IMR-90 (cell line): ENCODE measurements at regions of chr3 and their contacts with region 1.

Region 1: GRCh38 chr3:174125267-174125824 is 727.8 kb downstream of the NLGN1 start:
- DNase-seq: peak; percentile 65
- ATAC-seq: peak; percentile 87
- H3K4me3 ChIP-seq: no peak overlapping the region
- H3K27ac ChIP-seq: no peak overlapping the region
- H3K4me1 ChIP-seq: peaks cover 5% of the 10 kb centered on the region; the same call in 1 of the 2 replicates
- H3K27me3 ChIP-seq: no peaks in the 10 kb centered on the region
- CTCF ChIP-seq: peak; percentile 80
- POLR2A ChIP-seq: no peak
- RAD21 ChIP-seq: peak; percentile 91

Region 2: GRCh38 chr3:173266441-173266840 is 858.9 kb before region 1 on chr3:
- CTCF ChIA-PET with region 1: no interaction called
- POLR2A ChIA-PET with region 1: no interaction called
- dilution Hi-C with region 1: no loop called
- in situ Hi-C with region 1: no loop called
- intact Hi-C with region 1: no loop called
- DNase-seq: no peak
- ATAC-seq: no peak
- H3K4me3 ChIP-seq: no peak overlapping the region
- H3K27ac ChIP-seq: no peak overlapping the region
- H3K4me1 ChIP-seq: no peaks in the 10 kb centered on the region
- H3K27me3 ChIP-seq: no peaks in the 10 kb centered on the region
- CTCF ChIP-seq: no peak
- POLR2A ChIP-seq: no peak
- RAD21 ChIP-seq: no peak

Region 3: DNA sequence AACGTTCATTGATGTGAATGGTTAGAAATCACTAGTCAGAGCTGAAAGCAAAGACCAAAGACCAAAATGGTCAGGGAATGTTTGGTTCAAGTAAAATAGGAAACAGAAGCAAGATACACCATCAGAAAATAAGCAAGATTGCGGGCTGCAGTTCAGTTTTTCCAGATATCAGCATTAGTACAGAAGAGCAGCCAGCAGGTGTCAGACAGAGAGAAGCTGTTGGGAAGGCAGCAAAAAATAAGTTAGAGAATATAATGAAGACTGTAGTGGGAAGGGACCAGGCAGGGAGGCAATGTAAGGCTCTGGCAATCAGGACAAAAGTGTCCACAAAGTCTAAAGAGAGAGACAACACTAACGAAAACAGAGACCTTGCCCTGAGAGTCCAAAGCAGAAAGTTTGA is 94.4 kb after region 1 on chr3:
- CTCF ChIA-PET with region 1: no interaction called
- POLR2A ChIA-PET with region 1: no interaction called
- dilution Hi-C with region 1: no loop called
- in situ Hi-C with region 1: no loop called
- intact Hi-C with region 1: no loop called
- DNase-seq: no peak
- ATAC-seq: no peak
- H3K4me3 ChIP-seq: no peak overlapping the region
- H3K27ac ChIP-seq: no peak overlapping the region
- H3K4me1 ChIP-seq: peaks cover 2% of the 10 kb centered on the region; the same call in 1 of the 2 replicates
- H3K27me3 ChIP-seq: no peaks in the 10 kb centered on the region
- CTCF ChIP-seq: 0 out of 2 replicates have a peak, but pooled peaks have one; percentile 17
- POLR2A ChIP-seq: no peak
- RAD21 ChIP-seq: peak; percentile 15; the same call in 1 of the 2 replicates

Region 4: GRCh38 chr3:174397848-174398247 is 272.5 kb after region 1 on chr3:
- CTCF ChIA-PET with region 1: interaction called, 3 read pairs
- POLR2A ChIA-PET with region 1: no interaction called
- dilution Hi-C with region 1: no loop called
- in situ Hi-C with region 1: no loop called
- intact Hi-C with region 1: loop called (anchors 2 kb)
- DNase-seq: peak; percentile 50
- ATAC-seq: 0 out of 2 replicates have a peak, but pooled peaks have one; percentile 24
- H3K4me3 ChIP-seq: no peak overlapping the region
- H3K27ac ChIP-seq: no peak overlapping the region
- H3K4me1 ChIP-seq: no peaks in the 10 kb centered on the region
- H3K27me3 ChIP-seq: no peaks in the 10 kb centered on the region
- CTCF ChIP-seq: peak; percentile 60
- POLR2A ChIP-seq: no peak
- RAD21 ChIP-seq: peak; percentile 72

Region 5: GRCh38 chr3:174955513-174956001 is 830.2 kb after region 1 on chr3:
- CTCF ChIA-PET with region 1: no interaction called
- POLR2A ChIA-PET with region 1: no interaction called
- dilution Hi-C with region 1: no loop called
- in situ Hi-C with region 1: no loop called
- intact Hi-C with region 1: loop called (anchors 5 kb)
- DNase-seq: peak; percentile 48
- ATAC-seq: peak; percentile 25; the same call in 1 of the 2 replicates
- H3K4me3 ChIP-seq: no peak overlapping the region
- H3K27ac ChIP-seq: peak overlapping the region; percentile 29; the same call in 1 of the 2 replicates
- H3K4me1 ChIP-seq: peaks cover 19% of the 10 kb centered on the region
- H3K27me3 ChIP-seq: no peaks in the 10 kb centered on the region
- CTCF ChIP-seq: no peak
- POLR2A ChIP-seq: no peak
- RAD21 ChIP-seq: no peak